AG04450 (cell line): ENCODE measurements at regions of chr1 and their contacts with region 1.

Region 1: DNA sequence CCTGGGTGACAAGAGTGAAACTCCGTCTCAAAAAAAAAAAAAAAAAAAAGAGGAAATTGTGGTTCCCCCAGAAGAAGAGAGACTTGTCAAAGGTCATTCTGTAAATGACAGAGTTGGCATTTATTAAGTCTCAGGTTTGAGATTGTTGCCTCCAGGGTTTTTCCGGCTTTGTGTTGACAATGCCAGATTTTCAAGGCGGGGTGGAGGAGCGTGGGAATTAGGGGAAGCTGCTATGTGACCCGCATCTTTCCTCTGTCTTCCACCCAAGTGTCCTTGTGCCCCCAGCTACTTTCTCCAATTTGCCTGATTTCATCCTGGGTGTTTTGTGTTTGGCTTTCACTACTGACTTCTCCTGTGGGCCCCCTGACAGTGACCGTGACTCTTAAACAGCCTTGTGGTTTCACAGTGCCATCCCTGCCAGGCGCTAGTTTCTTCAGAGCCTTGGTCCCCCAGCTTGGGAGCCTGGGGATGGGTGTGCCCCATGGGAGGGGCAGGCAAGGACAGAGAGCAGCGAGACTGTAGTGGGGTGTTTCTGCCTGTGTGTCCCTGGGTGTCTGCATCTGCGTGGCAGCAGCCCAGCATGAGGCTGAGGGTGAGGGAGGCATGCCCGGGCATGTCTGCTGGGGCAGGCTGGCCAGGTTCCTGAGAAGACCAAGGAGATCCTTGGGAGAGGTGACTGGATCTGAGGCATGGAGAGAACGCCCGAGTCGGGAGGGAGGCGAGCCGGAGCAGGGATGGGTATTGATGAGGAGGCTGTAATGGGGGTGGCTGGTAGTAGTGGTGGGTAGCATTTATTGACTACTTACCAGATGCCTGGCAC is 46.3 kb downstream of the IER5 start:
- DNase-seq: peak; percentile 38
- H3K4me3 ChIP-seq: no peak overlapping the region
- H3K27ac ChIP-seq: peak overlapping the region; percentile 99
- H3K27me3 ChIP-seq: no peaks in the 10 kb centered on the region
- CTCF ChIP-seq: no peak

Region 2: GRCh38 chr1:180229152-180229973 is 905.4 kb before region 1 on chr1:
- CTCF ChIA-PET with region 1: no interaction called
- POLR2A ChIA-PET with region 1: interaction called, 14 read pairs
- DNase-seq: no peak
- H3K4me3 ChIP-seq: peak overlapping the region; percentile 51
- H3K27ac ChIP-seq: no peak overlapping the region
- H3K27me3 ChIP-seq: peaks cover 68% of the 10 kb centered on the region
- CTCF ChIP-seq: no peak

Region 3: DNA sequence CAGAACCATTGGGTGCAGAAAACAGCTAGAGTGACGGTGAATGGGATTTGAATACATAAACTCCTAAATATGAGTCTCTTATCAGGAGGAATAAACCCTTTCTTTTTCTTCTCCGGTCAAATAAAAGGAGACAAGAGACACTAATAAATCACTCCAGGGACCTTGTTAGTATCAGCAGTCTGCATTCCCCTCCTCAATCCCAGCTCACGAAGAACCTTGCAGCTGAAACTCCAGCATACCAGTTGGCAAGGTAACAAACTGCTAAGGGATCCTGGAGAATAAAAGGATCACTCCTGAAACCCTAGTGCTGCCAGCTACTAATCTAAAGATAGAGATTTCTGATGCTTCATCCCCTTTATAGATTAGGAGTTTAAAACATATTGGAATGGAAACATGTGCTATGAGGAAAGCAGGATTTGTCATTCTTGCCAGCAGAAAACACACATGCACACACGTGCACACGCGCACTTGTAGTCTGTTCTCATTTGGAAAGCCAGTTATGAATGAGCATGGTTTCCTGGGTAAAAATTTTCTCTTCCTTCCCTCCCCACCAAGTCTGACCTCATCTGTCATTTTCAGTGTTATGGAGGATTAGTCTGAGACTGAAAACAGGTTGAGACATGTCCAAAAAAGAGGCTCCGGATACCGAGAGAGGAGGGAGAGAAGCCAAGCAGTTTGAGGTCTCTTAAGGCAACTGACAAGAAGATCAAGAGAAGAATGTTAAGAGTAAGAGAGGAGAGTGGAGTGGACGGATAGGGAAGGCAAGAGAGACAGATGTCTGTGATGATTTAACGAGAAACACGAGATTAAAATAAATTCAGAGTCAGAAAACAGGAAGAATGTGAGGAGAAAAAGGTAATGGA is 35.4 kb before region 1 on chr1:
- CTCF ChIA-PET with region 1: interaction called, 3 read pairs
- POLR2A ChIA-PET with region 1: interaction called, 24 read pairs
- DNase-seq: no peak
- H3K4me3 ChIP-seq: no peak overlapping the region
- H3K27ac ChIP-seq: peak overlapping the region; percentile 22
- H3K27me3 ChIP-seq: no peaks in the 10 kb centered on the region
- CTCF ChIP-seq: no peak

Region 4: GRCh38 chr1:181105134-181106021 is 29.4 kb before region 1 on chr1:
- CTCF ChIA-PET with region 1: interaction called, 3 read pairs
- POLR2A ChIA-PET with region 1: interaction called, 23 read pairs
- DNase-seq: peak; percentile 61
- H3K4me3 ChIP-seq: peak overlapping the region; percentile 70
- H3K27ac ChIP-seq: peak overlapping the region; percentile 68
- H3K27me3 ChIP-seq: no peaks in the 10 kb centered on the region
- CTCF ChIP-seq: no peak